GM12878 (cell line): ENCODE measurements at regions of chr11 and their contacts with region 1.

Region 1: DNA sequence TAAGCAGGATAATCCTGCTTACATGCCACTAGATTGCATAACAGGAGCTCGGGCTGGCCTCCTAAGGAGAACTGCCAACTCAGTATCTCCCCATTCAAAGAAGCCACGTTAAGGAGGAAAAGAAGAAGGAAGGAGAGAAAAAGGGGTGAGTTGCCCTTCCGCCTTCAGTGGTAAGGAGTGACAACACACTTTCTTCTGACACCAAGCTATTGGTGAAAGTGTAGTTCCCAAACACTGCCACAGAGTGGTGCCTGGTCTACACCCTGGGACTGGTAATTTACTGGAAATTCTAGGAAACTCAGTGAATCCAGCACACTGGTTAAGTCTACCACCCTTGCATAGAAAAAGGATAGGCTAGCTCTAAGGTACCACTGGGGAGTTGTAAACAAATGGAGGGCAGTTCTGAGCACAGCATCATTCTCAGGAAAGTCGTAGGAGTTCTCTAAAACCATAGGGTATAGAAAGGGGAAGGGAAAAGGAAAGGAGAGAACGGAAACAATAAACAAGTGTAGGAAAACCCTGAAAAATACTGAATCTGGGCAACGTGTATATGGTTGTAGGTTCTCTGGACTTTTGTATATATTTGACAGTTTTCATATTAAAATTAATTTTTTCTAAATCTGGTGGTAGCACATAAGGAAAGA is 58.2 kb downstream of the RRAS2 start:
- DNase-seq: no peak
- ATAC-seq: peak; percentile 92
- H3K4me3 ChIP-seq: no peak overlapping the region
- H3K27ac ChIP-seq: no peak overlapping the region
- H3K4me1 ChIP-seq: peaks cover 4% of the 10 kb centered on the region; the same call in 1 of the 2 replicates
- H3K27me3 ChIP-seq: no peaks in the 10 kb centered on the region
- CTCF ChIP-seq: peak; percentile 77 to 91 (median 88)
- EP300 ChIP-seq: no peak
- POLR2A ChIP-seq: no peak
- RAD21 ChIP-seq: peak; percentile 95

Region 2: DNA sequence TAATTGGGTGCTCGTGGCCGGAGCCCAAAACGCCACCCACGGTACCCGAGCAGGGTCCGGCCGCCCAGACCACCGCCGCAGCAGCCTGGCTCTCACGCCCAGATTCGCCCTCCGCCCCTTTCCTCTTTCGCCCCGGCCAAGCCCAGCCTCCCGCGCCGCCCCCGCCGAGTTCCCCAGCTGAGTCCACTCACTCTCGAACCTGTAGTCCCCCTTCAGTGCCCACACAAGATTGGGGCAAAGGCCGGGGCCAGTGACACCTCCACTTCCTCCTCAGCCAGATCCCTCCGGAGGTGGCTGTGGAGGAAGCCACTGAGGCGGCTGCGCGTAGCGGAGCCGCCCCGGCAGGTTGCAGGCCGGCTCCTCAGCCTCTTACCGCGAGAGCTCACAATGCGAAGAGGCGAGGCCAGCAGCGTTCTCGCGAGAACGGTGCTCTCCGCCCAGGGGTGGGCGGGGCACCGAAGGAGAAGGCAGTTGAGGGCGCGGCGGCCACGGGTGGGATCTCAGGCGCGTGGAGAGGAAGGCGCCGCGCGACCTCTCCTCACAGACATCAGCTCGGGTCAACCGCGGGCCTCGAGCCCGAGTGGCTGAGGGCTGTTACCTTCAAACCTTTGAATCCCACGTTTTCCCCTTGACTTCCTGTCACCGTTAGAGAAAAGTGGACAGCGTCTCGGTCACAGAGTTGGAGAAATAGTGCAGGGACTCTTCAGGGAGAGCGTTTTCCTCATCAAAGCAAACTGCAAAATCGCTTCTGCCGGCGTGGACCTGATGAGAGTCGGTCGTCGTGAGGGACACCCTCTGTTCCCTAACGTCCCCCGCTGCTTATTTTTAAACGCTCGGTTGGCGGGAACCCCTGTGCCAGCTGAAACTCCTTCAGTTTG is 837.6 kb before region 1 on chr11 and contains the start of gene BTBD10:
- CTCF ChIA-PET with region 1: no interaction called
- POLR2A ChIA-PET with region 1: no interaction called
- RAD21 ChIA-PET with region 1: no interaction called
- SMC1A ChIA-PET with region 1: no interaction called
- in situ Hi-C with region 1: no loop called
- intact Hi-C with region 1: no loop called
- DNase-seq: peak; percentile 89
- ATAC-seq: peak; percentile 97
- H3K4me3 ChIP-seq: peak within 1 kb of the TSS; percentile 90
- H3K27ac ChIP-seq: peak within 1 kb of the TSS; percentile 88
- H3K4me1 ChIP-seq: no peaks in the 10 kb centered on the region
- H3K27me3 ChIP-seq: no peaks in the 10 kb centered on the region
- CTCF ChIP-seq: no peak
- EP300 ChIP-seq: no peak
- POLR2A ChIP-seq: peak; percentile 99
- RAD21 ChIP-seq: no peak
- polyA plus RNA-seq, gene BTBD10: 25.4 to 25.6 TPM

Region 3: DNA sequence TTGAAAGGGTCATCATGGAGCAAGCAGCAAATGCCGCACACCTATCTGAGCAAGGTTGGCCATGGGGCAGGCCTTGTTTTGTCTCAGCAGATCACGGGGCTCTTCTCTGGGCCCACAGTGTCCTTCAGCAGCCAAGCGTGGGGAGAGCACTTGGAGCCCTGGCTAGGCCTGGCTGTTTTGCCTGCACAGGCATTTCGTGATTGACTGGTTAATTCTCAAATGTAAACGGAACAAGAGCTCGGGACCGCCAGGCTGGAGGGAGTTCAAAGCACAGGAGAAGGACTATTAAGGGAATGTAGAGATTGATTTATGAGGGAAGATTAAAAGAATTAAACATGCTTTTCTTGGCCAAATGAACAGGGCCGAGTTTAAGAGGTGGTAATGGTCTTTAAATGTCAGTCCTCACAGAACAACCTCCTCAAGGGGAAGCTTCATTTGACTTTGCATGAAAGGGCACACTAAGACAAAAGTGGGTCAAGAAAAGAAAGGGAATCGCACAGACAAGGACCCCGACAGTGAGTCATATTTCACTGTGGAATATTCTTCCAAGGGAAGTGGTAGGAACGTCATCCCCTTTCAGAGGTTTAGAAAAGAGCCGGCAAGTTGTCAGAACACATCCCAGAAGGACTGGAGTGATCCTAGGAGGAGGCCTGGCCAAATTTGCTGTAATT is 317.6 kb before region 1 on chr11:
- CTCF ChIA-PET with region 1: no interaction called
- POLR2A ChIA-PET with region 1: no interaction called
- RAD21 ChIA-PET with region 1: no interaction called
- SMC1A ChIA-PET with region 1: no interaction called
- in situ Hi-C with region 1: no loop called
- intact Hi-C with region 1: no loop called
- DNase-seq: no peak
- ATAC-seq: no peak
- H3K4me3 ChIP-seq: no peak overlapping the region
- H3K27ac ChIP-seq: no peak overlapping the region
- H3K4me1 ChIP-seq: no peaks in the 10 kb centered on the region
- H3K27me3 ChIP-seq: no peaks in the 10 kb centered on the region
- CTCF ChIP-seq: no peak
- EP300 ChIP-seq: no peak
- POLR2A ChIP-seq: no peak
- RAD21 ChIP-seq: no peak

Region 4: GRCh38 chr11:14125529-14125928 is 175.3 kb before region 1 on chr11:
- CTCF ChIA-PET with region 1: no interaction called
- POLR2A ChIA-PET with region 1: no interaction called
- RAD21 ChIA-PET with region 1: no interaction called
- SMC1A ChIA-PET with region 1: no interaction called
- in situ Hi-C with region 1: no loop called
- intact Hi-C with region 1: no loop called
- DNase-seq: no peak
- ATAC-seq: no peak
- H3K4me3 ChIP-seq: no peak overlapping the region
- H3K27ac ChIP-seq: no peak overlapping the region
- H3K4me1 ChIP-seq: no peaks in the 10 kb centered on the region
- H3K27me3 ChIP-seq: no peaks in the 10 kb centered on the region
- CTCF ChIP-seq: no peak
- EP300 ChIP-seq: no peak
- POLR2A ChIP-seq: no peak
- RAD21 ChIP-seq: no peak

Region 5: DNA sequence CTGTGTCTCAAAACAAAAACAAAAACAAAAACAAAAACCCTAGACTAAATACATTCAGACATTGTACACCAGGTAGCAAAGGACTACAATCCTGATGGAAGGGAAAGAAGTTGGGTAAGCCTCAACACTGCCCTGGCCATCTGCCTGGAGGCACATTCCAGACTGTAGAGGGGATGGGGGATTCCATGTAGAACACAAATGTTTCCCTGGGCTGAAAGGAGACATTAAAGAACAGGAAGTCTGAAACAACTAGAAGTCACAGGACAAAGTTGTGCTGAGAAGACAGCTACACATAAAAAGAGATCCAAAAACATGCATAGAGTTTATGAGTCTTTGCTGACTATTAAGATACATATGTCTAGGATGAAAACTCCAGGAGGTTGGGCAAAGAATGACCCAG is 25.7 kb before region 1 on chr11:
- CTCF ChIA-PET with region 1: interaction called, 20 read pairs
- POLR2A ChIA-PET with region 1: no interaction called
- RAD21 ChIA-PET with region 1: interaction called, 4 read pairs
- SMC1A ChIA-PET with region 1: no interaction called
- in situ Hi-C with region 1: no loop called
- intact Hi-C with region 1: no loop called
- DNase-seq: no peak
- ATAC-seq: no peak
- H3K4me3 ChIP-seq: no peak overlapping the region
- H3K27ac ChIP-seq: no peak overlapping the region
- H3K4me1 ChIP-seq: peaks cover 32% of the 10 kb centered on the region
- H3K27me3 ChIP-seq: no peaks in the 10 kb centered on the region
- CTCF ChIP-seq: no peak
- EP300 ChIP-seq: no peak
- POLR2A ChIP-seq: no peak
- RAD21 ChIP-seq: no peak

Region 6: DNA sequence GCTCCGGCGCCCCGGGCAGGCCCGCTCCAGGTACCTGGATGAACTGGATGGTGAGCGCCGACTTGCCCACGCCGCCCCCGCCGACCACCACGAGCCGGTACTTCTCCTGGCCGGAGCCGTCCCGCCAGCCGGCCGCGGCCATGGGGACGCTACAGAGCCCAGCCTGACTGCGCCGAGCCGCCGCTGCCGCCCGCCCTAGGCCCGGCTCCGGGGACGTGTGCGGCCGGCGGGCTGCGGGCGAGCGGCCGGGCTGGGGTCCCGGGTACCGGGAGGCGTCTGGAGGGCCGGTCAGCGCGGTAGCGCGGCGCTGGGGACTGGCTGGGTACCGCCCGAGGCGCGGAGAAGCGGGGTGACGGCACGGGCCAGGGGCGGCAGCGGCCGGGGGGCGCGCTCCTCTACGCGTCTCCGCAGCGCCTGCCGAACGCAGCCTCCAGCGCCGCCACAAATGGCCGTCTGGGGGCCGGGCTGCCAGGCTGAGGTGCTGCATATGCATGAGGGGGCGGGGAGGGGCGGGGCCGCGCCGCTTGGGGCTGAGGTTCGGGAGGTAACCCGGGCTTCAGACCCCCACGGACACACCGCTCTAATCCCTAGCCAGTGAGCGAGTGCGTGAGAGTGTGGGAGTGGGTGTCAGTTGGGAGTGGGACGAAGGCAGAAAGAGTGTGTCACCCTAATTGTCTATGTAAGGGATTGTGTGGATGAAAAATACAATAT is 58.1 kb after region 1 on chr11 and contains the start of gene RRAS2:
- CTCF ChIA-PET with region 1: interaction called, 12 read pairs
- POLR2A ChIA-PET with region 1: interaction called, 4 read pairs
- RAD21 ChIA-PET with region 1: interaction called, 7 read pairs
- SMC1A ChIA-PET with region 1: interaction called, 38 read pairs
- in situ Hi-C with region 1: no loop called
- intact Hi-C with region 1: no loop called
- DNase-seq: no peak
- ATAC-seq: peak; percentile 88
- H3K4me3 ChIP-seq: peak within 1 kb of the TSS; percentile 90
- H3K27ac ChIP-seq: peak within 1 kb of the TSS; percentile 86
- H3K4me1 ChIP-seq: peaks cover 4% of the 10 kb centered on the region; the same call in 1 of the 2 replicates
- H3K27me3 ChIP-seq: no peaks in the 10 kb centered on the region
- CTCF ChIP-seq: 0 out of 6 replicates have a peak, but pooled peaks of 2 of the 3 experiments have one; percentile 6 to 11
- EP300 ChIP-seq: no peak
- POLR2A ChIP-seq: peak; percentile 92
- RAD21 ChIP-seq: 0 out of 2 replicates have a peak, but pooled peaks have one; percentile 14
- polyA plus RNA-seq, gene RRAS2: 26.9 to 33.3 TPM

Region 7: DNA sequence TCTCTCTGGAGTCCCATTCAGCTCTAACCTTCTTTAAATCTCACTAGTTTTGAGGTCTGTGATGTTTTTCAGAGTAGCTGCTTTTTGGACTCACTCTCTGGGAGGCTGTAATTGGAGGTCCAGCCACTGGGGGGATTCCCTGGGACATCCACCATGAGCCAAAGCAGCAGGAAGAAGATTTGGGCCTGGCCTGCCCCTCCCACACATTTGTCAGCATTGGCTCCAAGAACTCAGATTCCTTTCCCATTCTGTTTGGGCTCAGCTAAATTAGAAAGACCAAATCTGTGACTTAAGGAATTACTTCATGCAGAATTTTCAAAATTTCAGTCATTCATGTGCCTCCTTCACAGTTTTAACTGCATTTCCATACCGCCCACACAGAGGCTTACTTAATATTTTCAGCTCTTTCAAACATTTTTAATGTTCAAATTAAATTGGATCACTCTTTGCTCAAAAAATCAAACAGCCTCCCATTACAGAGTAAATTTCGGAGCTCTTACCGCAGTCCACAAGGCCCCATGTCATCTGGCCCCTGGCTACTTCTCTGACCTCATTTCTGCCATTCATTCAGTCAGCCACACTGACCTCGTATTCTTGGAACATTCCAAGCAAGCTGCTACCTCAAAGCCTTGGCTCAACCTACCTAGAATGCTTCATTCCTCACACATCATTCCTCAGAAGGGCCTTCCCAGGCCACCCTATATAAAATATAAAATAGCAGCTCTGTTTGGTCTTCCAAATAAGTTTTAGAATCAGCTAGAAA is 112.7 kb after region 1 on chr11:
- CTCF ChIA-PET with region 1: interaction called, 271 read pairs
- POLR2A ChIA-PET with region 1: no interaction called
- RAD21 ChIA-PET with region 1: interaction called, 123 read pairs
- SMC1A ChIA-PET with region 1: interaction called, 120 read pairs
- in situ Hi-C with region 1: no loop called
- intact Hi-C with region 1: loop called (anchors 1 kb)
- DNase-seq: no peak
- ATAC-seq: peak; percentile 22; the same call in 1 of the 3 replicates
- H3K4me3 ChIP-seq: no peak overlapping the region
- H3K27ac ChIP-seq: no peak overlapping the region
- H3K4me1 ChIP-seq: peaks cover 10% of the 10 kb centered on the region
- H3K27me3 ChIP-seq: no peaks in the 10 kb centered on the region
- CTCF ChIP-seq: peak in 1 of 3 experiments; percentile 32; a peak in 1 of 6 replicates
- EP300 ChIP-seq: no peak
- POLR2A ChIP-seq: no peak
- RAD21 ChIP-seq: no peak

Region 8: DNA sequence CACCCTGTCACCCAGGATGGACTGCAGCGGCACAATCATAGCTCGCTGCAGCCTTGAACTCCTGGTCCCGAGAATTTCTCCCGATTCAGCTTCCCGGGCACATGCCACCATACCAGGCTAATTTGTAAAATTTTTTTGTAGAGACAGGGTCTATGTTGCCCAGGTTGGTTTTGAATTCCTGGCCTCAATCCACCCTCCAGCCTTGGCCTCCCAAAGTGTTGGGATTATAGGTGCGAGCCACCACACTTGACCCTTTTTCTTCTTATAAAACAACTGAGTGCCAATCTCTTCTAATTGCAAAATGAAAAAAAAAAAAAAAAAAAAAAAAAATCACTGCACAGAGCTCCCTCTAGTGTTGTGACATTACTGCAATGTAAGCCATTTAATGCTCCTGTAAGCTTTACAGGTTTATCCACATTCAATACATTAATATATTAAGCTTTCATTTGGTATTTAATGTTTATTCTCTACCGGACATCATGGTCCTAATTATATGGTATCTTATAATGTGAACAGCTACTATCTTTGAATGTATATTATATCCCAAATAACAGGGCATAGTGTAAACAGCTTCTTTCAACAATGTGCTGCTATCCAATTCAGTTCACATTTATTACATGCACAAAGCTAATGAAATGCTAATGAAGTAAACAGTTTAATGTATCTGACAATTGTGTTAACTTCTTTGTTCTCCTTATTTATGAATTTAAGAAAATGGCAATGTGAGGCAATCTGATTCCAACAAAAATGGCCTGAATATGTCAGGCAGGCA is 154.3 kb after region 1 on chr11:
- CTCF ChIA-PET with region 1: interaction called, 238 read pairs
- POLR2A ChIA-PET with region 1: interaction called, 4 read pairs
- RAD21 ChIA-PET with region 1: interaction called, 117 read pairs
- SMC1A ChIA-PET with region 1: interaction called, 138 read pairs
- in situ Hi-C with region 1: loop called (anchors 5 kb)
- intact Hi-C with region 1: loop called (anchors 1 kb)
- DNase-seq: no peak
- ATAC-seq: peak; percentile 65
- H3K4me3 ChIP-seq: no peak overlapping the region
- H3K27ac ChIP-seq: no peak overlapping the region
- H3K4me1 ChIP-seq: no peaks in the 10 kb centered on the region
- H3K27me3 ChIP-seq: no peaks in the 10 kb centered on the region
- CTCF ChIP-seq: peak; percentile 51 to 66 (median 56); a peak in 5 of 6 replicates
- EP300 ChIP-seq: no peak
- POLR2A ChIP-seq: no peak
- RAD21 ChIP-seq: peak; percentile 65